Activated CD4-positive, alpha-beta T cell treated with anti-CD3 and anti-CD28 coated beads, Interleukin-2, amount 10 ng/mL, durations not matched to agents 24 days and 14 days (primary cell): ENCODE measurements at regions of chr7 and their contacts with region 1.

Region 1: GRCh38 chr7:55964261-55965099 is at the start of gene NIPSNAP2:
- DNase-seq: peak; percentile 91
- H3K4me3 Mint-ChIP-seq: peak within 1 kb of the TSS; percentile 95
- H3K27ac Mint-ChIP-seq: peak within 1 kb of the TSS; percentile 90
- H3K4me1 Mint-ChIP-seq: peaks cover 18% of the 10 kb centered on the region
- H3K27me3 Mint-ChIP-seq: no peaks in the 10 kb centered on the region
- total RNA-seq, gene NIPSNAP2: 52.0 and 53.1 TPM in 2 replicates

Region 2: DNA sequence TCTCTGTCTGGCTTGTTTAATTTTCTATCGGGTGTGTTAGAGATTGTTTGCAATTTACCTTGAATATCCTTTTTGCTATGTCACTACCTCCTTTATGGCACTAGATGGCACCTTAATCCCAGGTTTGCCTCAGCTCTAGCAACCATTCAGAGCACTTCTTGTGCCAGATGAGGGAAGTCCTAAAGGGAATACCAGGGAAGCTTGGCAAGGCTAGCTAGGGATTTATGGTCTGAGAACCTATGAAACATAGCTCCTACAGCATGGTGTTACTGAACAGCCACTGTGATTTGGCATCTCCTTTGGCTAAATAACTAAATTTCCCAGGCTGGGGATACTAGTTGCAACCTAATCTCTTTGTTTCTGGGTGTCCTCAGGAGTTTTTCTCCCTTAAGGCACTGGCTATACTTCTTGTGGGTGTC is 323.2 kb before region 1 on chr7:
- intact Hi-C with region 1: loop called (anchors 1 kb)
- DNase-seq: peak; percentile 83
- H3K4me3 Mint-ChIP-seq: no peak overlapping the region
- H3K27ac Mint-ChIP-seq: no peak overlapping the region
- H3K4me1 Mint-ChIP-seq: peaks cover 8% of the 10 kb centered on the region
- H3K27me3 Mint-ChIP-seq: peaks cover 9% of the 10 kb centered on the region

Region 3: GRCh38 chr7:55784151-55784550 is 180.3 kb before region 1 on chr7:
- intact Hi-C with region 1: no loop called
- DNase-seq: no peak
- H3K4me3 Mint-ChIP-seq: no peak overlapping the region
- H3K27ac Mint-ChIP-seq: no peak overlapping the region
- H3K4me1 Mint-ChIP-seq: no peaks in the 10 kb centered on the region
- H3K27me3 Mint-ChIP-seq: no peaks in the 10 kb centered on the region

Region 4: DNA sequence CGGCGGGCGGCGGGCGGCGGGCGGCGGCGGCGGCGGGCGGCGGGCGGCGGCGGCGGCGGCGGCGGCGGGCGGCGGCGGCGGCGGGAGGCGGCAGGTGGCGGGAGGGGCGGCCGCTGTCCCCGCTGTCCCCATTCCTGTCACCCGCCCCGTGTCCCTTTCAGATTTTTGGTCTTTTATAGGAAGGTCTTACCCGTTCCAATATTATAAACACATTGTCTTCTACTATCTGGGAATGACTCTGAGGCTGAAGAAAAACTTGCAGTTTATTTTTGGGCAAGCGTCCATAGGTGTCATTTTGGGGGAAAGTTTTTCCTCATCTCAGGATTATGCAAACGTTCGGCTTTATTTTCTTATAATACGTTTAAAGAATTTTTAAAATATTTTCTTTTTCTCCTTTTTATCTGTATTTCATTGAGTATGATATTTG is 76.6 kb before region 1 on chr7:
- intact Hi-C with region 1: loop called (anchors 2 kb)
- DNase-seq: peak; percentile 64
- H3K4me3 Mint-ChIP-seq: peak overlapping the region; percentile 82
- H3K27ac Mint-ChIP-seq: peak overlapping the region; percentile 88
- H3K4me1 Mint-ChIP-seq: peaks cover 8% of the 10 kb centered on the region
- H3K27me3 Mint-ChIP-seq: no peaks in the 10 kb centered on the region

Region 5: GRCh38 chr7:55951637-55952351 is 12.7 kb before region 1 on chr7 and contains the start of gene MRPS17:
- intact Hi-C with region 1: loop called (anchors 1 kb)
- DNase-seq: peak; percentile 98
- H3K4me3 Mint-ChIP-seq: peak within 1 kb of the TSS; percentile 98
- H3K27ac Mint-ChIP-seq: peak within 1 kb of the TSS; percentile 98
- H3K4me1 Mint-ChIP-seq: peaks cover 10% of the 10 kb centered on the region
- H3K27me3 Mint-ChIP-seq: no peaks in the 10 kb centered on the region
- total RNA-seq, gene MRPS17: 36.4 and 37.6 TPM in 2 replicates

Region 6: GRCh38 chr7:56003749-56004148 is 39.3 kb after region 1 on chr7:
- intact Hi-C with region 1: loop called (anchors 5 kb)
- DNase-seq: no peak
- H3K4me3 Mint-ChIP-seq: no peak overlapping the region
- H3K27ac Mint-ChIP-seq: no peak overlapping the region
- H3K4me1 Mint-ChIP-seq: peaks cover 12% of the 10 kb centered on the region
- H3K27me3 Mint-ChIP-seq: no peaks in the 10 kb centered on the region

Region 7: GRCh38 chr7:56063882-56064625 is 99.6 kb after region 1 on chr7 and contains the start of gene SUMF2:
- intact Hi-C with region 1: loop called (anchors 2 kb)
- DNase-seq: peak; percentile 97
- H3K4me3 Mint-ChIP-seq: peak within 1 kb of the TSS; percentile 94
- H3K27ac Mint-ChIP-seq: peak within 1 kb of the TSS; percentile 96
- H3K4me1 Mint-ChIP-seq: peaks cover 34% of the 10 kb centered on the region
- H3K27me3 Mint-ChIP-seq: peaks cover 2% of the 10 kb centered on the region
- total RNA-seq, gene SUMF2: 154 and 161 TPM in 2 replicates